ENCODE measurements at regions of chr16 and their contacts with region 1.

Region 1: GRCh38 chr16:75471723-75472633 is 7.5 kb upstream of the TMEM170A start:
- DNase-seq: no peak
- ATAC-seq: peak; percentile 82
- H3K4me3 Mint-ChIP-seq: no peak overlapping the region
- H3K27ac Mint-ChIP-seq: no peak overlapping the region
- H3K4me1 Mint-ChIP-seq: no peaks in the 10 kb centered on the region
- H3K27me3 Mint-ChIP-seq: no peaks in the 10 kb centered on the region
- CTCF ChIP-seq: no peak

Region 2: DNA sequence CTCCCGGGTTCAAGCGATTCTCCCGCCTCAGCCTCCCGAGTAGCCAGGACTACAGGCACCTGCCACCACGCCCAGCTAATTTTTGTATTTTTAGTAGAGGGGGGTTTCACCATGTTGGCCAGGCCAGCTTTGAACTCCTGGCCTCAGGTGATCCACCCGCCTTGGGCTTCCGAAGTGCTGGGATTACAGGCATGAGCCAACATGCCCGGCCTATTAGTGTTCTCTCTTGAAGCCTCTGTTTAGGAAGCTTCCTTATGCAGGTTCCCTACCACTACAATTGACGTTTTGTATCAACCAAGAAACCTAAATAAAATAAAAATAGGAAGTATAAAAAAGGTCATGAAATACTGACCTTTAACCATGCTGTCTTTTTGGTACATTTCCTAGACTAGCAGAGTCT is 47.9 kb after region 1 on chr16:
- CTCF ChIA-PET with region 1: interaction called, 10 read pairs
- POLR2A ChIA-PET with region 1: interaction called, 4 read pairs
- intact Hi-C with region 1: loop called (anchors 1 kb)
- DNase-seq: no peak
- ATAC-seq: no peak
- H3K4me3 Mint-ChIP-seq: no peak overlapping the region
- H3K27ac Mint-ChIP-seq: no peak overlapping the region
- H3K4me1 Mint-ChIP-seq: peaks cover 13% of the 10 kb centered on the region
- H3K27me3 Mint-ChIP-seq: no peaks in the 10 kb centered on the region
- CTCF ChIP-seq: no peak

Region 3: GRCh38 chr16:75593825-75594820 is 122.1 kb after region 1 on chr16:
- CTCF ChIA-PET with region 1: no interaction called
- POLR2A ChIA-PET with region 1: no interaction called
- intact Hi-C with region 1: no loop called
- DNase-seq: no peak
- ATAC-seq: no peak
- H3K4me3 Mint-ChIP-seq: no peak overlapping the region
- H3K27ac Mint-ChIP-seq: no peak overlapping the region
- H3K4me1 Mint-ChIP-seq: no peaks in the 10 kb centered on the region
- H3K27me3 Mint-ChIP-seq: no peaks in the 10 kb centered on the region
- CTCF ChIP-seq: no peak